Heart left ventricle (tissue), 16 donors: ENCODE measurements at regions of chr9 and their contacts with region 1.

Region 1: GRCh38 chr9:38707885-38708637 is 11.9 kb downstream of the FAM240B start:
- DNase-seq: no peak
- ATAC-seq: no peak
- H3K4me3 ChIP-seq: no peak overlapping the region
- H3K27ac ChIP-seq: no peak overlapping the region
- H3K4me1 ChIP-seq: peaks cover 0 to 11% (median 0%) of the 10 kb centered on the region in 12 donors
- H3K27me3 ChIP-seq: no peaks in the 10 kb centered on the region
- CTCF ChIP-seq: no peak
- POLR2A ChIP-seq: no peak

Region 2: GRCh38 chr9:38641985-38642864 is 65.8 kb before region 1 on chr9:
- intact Hi-C with region 1: loop called in 1 of 10 experiments (anchors 10 kb)
- DNase-seq: no peak
- ATAC-seq: peak; percentile 87 to 91 (median 90)
- H3K4me3 ChIP-seq: no peak overlapping the region
- H3K27ac ChIP-seq: no peak overlapping the region
- H3K4me1 ChIP-seq: peaks cover 0 to 4% (median 0%) of the 10 kb centered on the region in 12 donors
- H3K27me3 ChIP-seq: peaks cover 0 to 7% (median 0%) of the 10 kb centered on the region in 9 donors
- CTCF ChIP-seq: peak in 11 of 12 donors; percentile 12 to 50 (median 40)
- POLR2A ChIP-seq: no peak

Region 3: DNA sequence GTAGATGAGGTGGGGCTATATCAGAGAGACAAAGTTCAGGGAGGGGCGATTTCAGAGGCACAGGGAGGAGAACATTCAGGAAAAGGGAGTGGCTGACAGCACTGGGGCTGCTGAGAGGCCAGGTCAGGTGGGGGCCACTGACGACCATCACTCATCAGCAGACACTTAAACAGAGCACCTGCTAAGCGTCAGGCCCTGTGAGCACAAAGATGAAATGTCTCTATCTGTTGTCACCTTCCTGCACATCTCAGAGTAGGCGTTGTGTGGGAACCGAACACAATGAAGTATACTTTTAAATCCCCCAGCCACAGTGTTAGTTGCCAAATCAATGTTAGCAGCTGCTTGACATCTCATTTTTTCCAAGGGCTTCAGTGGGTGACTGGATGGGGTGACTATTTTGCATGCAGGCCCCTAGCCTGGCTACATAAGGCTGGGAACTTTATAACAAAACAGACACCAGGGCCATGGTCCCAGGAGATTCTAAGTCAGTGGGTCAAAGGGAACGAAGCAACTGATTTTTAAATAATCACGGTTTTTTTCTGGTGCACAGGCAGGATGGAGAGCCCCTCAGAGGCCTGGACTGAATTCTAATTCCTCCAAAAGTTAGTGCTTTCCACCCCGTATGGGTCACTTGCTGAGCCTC is 56.5 kb before region 1 on chr9:
- intact Hi-C with region 1: loop called in 4 of 10 experiments (anchors 10 kb)
- DNase-seq: peak in 2 of 5 donors; percentile 41 to 61
- ATAC-seq: peak; percentile 6 to 74 (median 56)
- H3K4me3 ChIP-seq: peak overlapping the region in 5 of 12 donors; percentile 15 to 48 (median 41)
- H3K27ac ChIP-seq: peak overlapping the region in 11 of 12 donors; percentile 5 to 94 (median 76)
- H3K4me1 ChIP-seq: peaks cover 0 to 23% (median 0%) of the 10 kb centered on the region in 12 donors
- H3K27me3 ChIP-seq: peaks cover 0 to 5% (median 0%) of the 10 kb centered on the region in 9 donors
- CTCF ChIP-seq: no peak
- POLR2A ChIP-seq: no peak

Region 4: GRCh38 chr9:38687387-38687842 is 20.6 kb before region 1 on chr9:
- intact Hi-C with region 1: no loop called
- DNase-seq: peak in 4 of 5 donors; percentile 28 to 79 (median 62)
- ATAC-seq: peak; percentile 47 to 91 (median 79)
- H3K4me3 ChIP-seq: peak overlapping the region in 9 of 12 donors; percentile 11 to 35 (median 27)
- H3K27ac ChIP-seq: no peak overlapping the region
- H3K4me1 ChIP-seq: peaks cover 0 to 20% (median 3%) of the 10 kb centered on the region in 12 donors
- H3K27me3 ChIP-seq: peaks cover 0 to 4% (median 0%) of the 10 kb centered on the region in 9 donors
- CTCF ChIP-seq: no peak
- POLR2A ChIP-seq: no peak

Region 5: DNA sequence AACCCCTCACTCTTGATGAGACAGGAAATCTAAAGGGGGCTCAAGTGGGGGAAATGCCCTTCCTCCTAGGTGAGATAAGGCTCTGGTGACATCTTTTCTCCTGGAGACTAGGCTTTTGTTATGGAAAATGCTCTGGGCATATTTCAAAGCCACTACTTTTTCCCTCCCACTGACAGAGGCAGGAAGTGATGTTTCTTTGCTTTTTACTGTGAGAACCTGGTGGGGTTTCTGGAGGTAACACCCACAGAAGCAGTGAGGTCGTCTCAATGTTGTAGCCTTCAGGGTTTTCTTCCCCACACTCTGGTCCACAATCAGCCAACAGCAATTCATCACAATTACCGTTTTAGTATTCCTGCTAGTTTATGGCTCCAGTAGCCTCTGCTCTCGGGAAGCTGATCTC is 53.3 kb after region 1 on chr9:
- intact Hi-C with region 1: no loop called
- DNase-seq: no peak
- ATAC-seq: no peak
- H3K4me3 ChIP-seq: no peak overlapping the region
- H3K27ac ChIP-seq: no peak overlapping the region
- H3K4me1 ChIP-seq: no peaks in the 10 kb centered on the region
- H3K27me3 ChIP-seq: no peaks in the 10 kb centered on the region
- CTCF ChIP-seq: no peak
- POLR2A ChIP-seq: no peak